ENCODE measurements at regions of chr5 and their contacts with region 1.

Region 1: GRCh38 chr5:89729623-89730301 is 679.8 kb downstream of the CETN3 start:
- DNase-seq: peak; percentile 8
- H3K4me3 ChIP-seq: no peak overlapping the region
- H3K27ac ChIP-seq: no peak overlapping the region
- H3K4me1 ChIP-seq: no peaks in the 10 kb centered on the region
- H3K27me3 ChIP-seq: peaks cover 2% of the 10 kb centered on the region
- CTCF ChIP-seq: peak; percentile 19 to 56

Region 2: DNA sequence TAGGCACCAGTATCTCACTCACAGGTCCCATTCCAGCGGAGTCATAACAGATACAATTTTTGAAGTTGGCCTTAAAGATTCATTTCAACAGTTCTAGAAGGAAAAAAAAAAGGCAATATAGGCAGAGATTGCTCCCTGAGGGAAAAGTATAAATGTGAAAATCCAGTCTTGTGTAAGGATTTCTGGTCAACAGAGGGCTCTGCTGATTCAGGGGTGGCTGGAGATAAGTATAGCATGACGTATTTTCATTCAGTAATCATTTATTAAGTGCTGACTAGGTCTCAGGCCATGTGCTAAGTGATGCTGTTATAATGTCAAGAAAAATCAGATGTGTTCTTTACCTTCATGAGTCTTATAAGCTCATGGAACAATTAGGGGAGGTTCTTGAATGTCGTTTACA is 469.5 kb before region 1 on chr5:
- CTCF ChIA-PET with region 1: no interaction called
- dilution Hi-C with region 1: no loop called
- in situ Hi-C with region 1: no loop called
- intact Hi-C with region 1: loop called (anchors 1 kb)
- DNase-seq: no peak
- H3K4me3 ChIP-seq: no peak overlapping the region
- H3K27ac ChIP-seq: no peak overlapping the region
- H3K4me1 ChIP-seq: peaks cover 5% of the 10 kb centered on the region
- H3K27me3 ChIP-seq: no peaks in the 10 kb centered on the region
- CTCF ChIP-seq: peak in 1 of 2 donors; percentile 28

Region 3: GRCh38 chr5:90274216-90274615 is 544.5 kb after region 1 on chr5:
- CTCF ChIA-PET with region 1: no interaction called
- dilution Hi-C with region 1: no loop called
- in situ Hi-C with region 1: no loop called
- intact Hi-C with region 1: no loop called
- DNase-seq: no peak
- H3K4me3 ChIP-seq: no peak overlapping the region
- H3K27ac ChIP-seq: no peak overlapping the region
- H3K4me1 ChIP-seq: no peaks in the 10 kb centered on the region
- H3K27me3 ChIP-seq: peaks cover 3% of the 10 kb centered on the region
- CTCF ChIP-seq: no peak

Measured in mammary epithelial cell (primary cell).